Psoas muscle (tissue), 8 donors: ENCODE measurements at regions of chr15 and their contacts with region 1.

Region 1: GRCh38 chr15:48868536-48868935 is 9.4 kb upstream of the EID1 start:
- DNase-seq: no peak
- ATAC-seq: no peak
- H3K4me3 ChIP-seq: no peak overlapping the region
- H3K27ac ChIP-seq: no peak overlapping the region
- H3K4me1 ChIP-seq: no peaks in the 10 kb centered on the region
- H3K27me3 ChIP-seq: no peaks in the 10 kb centered on the region
- CTCF ChIP-seq: no peak

Region 2: DNA sequence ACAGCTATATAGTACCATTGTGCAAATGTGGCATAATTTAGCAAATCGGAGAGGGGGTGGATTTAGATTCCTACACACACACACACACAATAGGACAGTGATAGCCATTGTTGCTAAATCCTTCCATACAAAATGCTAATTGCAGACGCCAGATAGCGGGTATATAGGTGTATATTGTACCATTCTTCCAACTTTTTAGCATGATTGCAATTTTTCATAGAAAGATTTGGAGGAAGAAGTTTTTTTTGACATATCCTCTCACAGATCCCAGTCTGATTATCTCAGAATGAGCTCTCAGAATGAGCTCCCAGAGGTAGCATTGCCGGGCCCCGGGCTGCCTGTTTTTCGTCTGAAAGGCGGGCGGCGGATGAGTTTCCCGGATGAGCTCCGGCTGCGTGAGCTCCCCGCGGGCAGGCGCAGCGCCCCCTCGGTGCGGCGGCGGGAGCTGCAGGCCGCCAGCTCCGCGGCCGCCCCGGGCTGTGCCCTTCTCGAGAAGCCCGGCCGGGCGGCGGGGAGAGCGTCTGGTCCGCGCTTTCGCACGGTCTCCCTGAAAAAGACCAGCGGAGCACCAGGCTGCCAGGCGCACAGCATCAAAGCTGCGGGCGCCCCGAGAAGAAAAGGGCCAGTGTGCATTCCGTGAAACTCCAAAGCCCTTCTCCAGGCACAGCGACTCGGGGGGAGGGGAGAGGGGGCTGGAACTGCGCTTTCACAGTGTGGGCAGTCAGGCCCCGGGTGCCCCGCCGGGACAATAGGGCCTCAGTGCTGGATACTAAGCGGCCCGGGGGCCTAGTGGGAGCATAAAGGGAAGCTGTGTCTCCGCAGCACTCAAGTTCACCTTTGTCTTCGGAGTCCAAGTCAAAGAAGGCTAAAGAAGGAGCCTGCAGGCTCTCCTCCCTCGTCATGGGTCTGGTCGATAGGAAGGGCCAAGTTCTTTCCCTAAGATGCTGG is 107.2 kb after region 1 on chr15:
- intact Hi-C with region 1: loop called (anchors 2 to 5 kb)
- DNase-seq: peak; percentile 81 to 87
- ATAC-seq: peak; percentile 97 to 100 (median 98)
- H3K4me3 ChIP-seq: peak overlapping the region; percentile 65
- H3K27ac ChIP-seq: peak overlapping the region; percentile 44
- H3K4me1 ChIP-seq: peaks cover 4% of the 10 kb centered on the region
- H3K27me3 ChIP-seq: no peaks in the 10 kb centered on the region
- CTCF ChIP-seq: peak; percentile 94